Naive thymus-derived CD4-positive, alpha-beta T cell (primary cell): ENCODE measurements at regions of chr4 and their contacts with region 1.

Region 1: DNA sequence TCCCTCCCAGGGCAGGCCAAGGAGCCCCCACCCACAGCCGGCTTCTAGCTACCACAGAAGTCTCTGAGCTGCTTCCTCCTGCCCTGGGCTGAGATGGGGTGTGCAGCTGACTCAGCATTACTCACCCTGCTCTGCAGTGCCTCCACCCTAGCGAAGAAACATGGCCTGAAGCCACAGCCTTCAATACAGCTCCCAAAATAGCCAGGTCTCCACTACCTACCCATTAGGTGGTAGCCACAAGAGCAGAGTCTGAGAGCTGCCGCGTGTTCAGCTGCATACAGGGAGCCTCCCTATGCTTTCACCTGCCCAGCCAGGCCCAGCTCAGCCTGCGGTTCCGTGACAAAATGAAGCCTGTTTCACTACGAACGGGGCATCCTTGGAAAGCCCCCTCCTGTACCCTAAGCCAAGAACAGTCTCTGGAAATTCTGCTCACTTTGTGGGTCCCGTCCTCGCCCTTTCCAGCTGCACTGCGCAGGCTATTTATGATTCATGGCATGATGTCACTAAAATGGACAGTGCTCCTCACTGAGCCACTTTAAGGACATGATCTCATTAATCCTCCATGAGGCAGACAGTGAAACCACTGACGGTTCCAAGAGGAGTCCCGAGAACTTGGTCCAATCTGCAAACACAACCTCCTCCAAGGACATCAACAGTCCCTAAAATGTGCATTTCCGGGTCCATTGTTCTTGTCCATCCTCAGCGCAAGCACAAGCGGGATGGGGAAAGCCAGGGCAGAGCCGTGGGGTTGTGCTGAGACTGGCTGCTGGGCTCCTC is 20.2 kb downstream of the WDR1 start:
- DNase-seq: peak; percentile 39 to 76 (median 69)
- ATAC-seq: peak; percentile 81
- H3K4me3 ChIP-seq: peak overlapping the region; percentile 21
- H3K4me3 Mint-ChIP-seq: peak overlapping the region in 9 of 10 donors; percentile 16 to 79 (median 55)
- H3K27ac ChIP-seq: peak overlapping the region; percentile 67
- H3K27ac Mint-ChIP-seq: peak overlapping the region; percentile 82 to 95 (median 90)
- H3K4me1 ChIP-seq: peaks cover 75 to 82% of the 10 kb centered on the region in 2 donors
- H3K4me1 Mint-ChIP-seq: peaks cover 66 to 100% (median 94%) of the 10 kb centered on the region in 7 donors
- H3K27me3 ChIP-seq: no peaks in the 10 kb centered on the region
- H3K27me3 Mint-ChIP-seq: no peaks in the 10 kb centered on the region

Region 2: GRCh38 chr4:10074767-10075105 is 21.7 kb before region 1 on chr4:
- CTCF ChIA-PET with region 1: interaction called, 3 read pairs
- POLR2A ChIA-PET with region 1: interaction called, 5 read pairs
- intact Hi-C with region 1: loop called in 1 of 2 experiments (anchors 2 kb)
- DNase-seq: no peak
- ATAC-seq: peak; percentile 37
- H3K4me3 ChIP-seq: no peak overlapping the region
- H3K4me3 Mint-ChIP-seq: no peak overlapping the region
- H3K27ac ChIP-seq: no peak overlapping the region
- H3K27ac Mint-ChIP-seq: peak overlapping the region in 5 of 9 donors; percentile 13 to 74 (median 33)
- H3K4me1 ChIP-seq: peaks cover 0 to 2% of the 10 kb centered on the region in 2 donors
- H3K4me1 Mint-ChIP-seq: peaks cover 0 to 8% (median 0%) of the 10 kb centered on the region in 7 donors
- H3K27me3 ChIP-seq: no peaks in the 10 kb centered on the region
- H3K27me3 Mint-ChIP-seq: no peaks in the 10 kb centered on the region

Region 3: DNA sequence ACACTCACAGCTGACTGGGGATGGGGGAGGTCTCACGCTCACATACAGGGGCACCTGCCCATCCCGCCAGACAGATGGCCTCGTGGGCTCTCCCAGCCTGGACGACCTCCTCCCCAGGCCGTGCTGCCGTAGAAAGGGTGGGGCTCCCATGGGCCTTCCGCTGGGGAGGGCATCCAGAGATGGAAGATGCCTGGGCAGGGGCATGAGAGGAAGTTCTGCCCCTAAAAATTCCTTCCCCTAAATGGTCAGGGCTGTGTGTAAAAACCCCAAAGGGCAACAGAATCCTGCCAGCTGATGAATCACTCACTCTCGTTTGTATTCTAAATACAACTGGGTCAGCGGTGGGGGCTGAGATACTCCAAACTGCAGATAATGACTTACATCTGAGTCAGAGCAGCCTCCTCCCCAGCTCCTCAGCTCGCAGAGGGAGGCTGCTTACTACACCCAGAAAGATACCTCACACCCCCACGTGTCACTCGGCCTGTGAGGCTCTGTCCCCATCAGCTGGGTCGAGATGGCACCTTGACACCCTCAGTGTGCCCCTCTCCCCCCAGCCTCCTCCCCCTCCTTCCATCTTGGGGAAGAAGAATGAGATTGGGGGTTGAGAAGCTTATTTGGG is 10.1 kb after region 1 on chr4:
- CTCF ChIA-PET with region 1: no interaction called
- POLR2A ChIA-PET with region 1: interaction called, 124 read pairs
- intact Hi-C with region 1: loop called (anchors 1 kb)
- DNase-seq: peak in 2 of 9 donors; percentile 59 to 69
- ATAC-seq: peak; percentile 83
- H3K4me3 ChIP-seq: peak overlapping the region; percentile 27
- H3K4me3 Mint-ChIP-seq: peak overlapping the region; percentile 29 to 97 (median 70)
- H3K27ac ChIP-seq: peak overlapping the region; percentile 66
- H3K27ac Mint-ChIP-seq: peak overlapping the region; percentile 50 to 93 (median 89)
- H3K4me1 ChIP-seq: peaks cover 79 to 94% of the 10 kb centered on the region in 2 donors
- H3K4me1 Mint-ChIP-seq: peaks cover 88 to 100% (median 98%) of the 10 kb centered on the region in 7 donors
- H3K27me3 ChIP-seq: no peaks in the 10 kb centered on the region
- H3K27me3 Mint-ChIP-seq: no peaks in the 10 kb centered on the region

Region 4: DNA sequence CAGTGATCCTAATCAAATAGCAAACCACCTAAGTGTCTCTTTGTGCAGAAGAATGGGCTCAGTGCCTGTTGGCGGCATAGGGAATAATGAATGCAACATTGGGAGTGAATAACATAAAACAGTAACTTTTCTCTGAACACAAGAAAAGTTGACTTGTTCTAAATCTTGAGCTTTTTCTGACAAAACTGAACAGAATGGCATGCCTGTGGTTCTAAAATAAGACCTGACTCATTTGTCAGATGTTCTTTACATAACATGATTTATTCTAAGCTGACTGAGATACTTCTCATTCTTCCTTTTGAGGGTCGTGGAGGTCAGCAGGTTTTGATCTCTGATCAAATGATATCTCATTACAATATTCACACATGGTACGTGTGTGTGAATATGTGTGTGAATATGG is 185.6 kb after region 1 on chr4:
- CTCF ChIA-PET with region 1: no interaction called
- POLR2A ChIA-PET with region 1: no interaction called
- intact Hi-C with region 1: no loop called
- DNase-seq: no peak
- ATAC-seq: no peak
- H3K4me3 ChIP-seq: no peak overlapping the region
- H3K4me3 Mint-ChIP-seq: no peak overlapping the region
- H3K27ac ChIP-seq: no peak overlapping the region
- H3K27ac Mint-ChIP-seq: no peak overlapping the region
- H3K4me1 ChIP-seq: no peaks in the 10 kb centered on the region
- H3K4me1 Mint-ChIP-seq: no peaks in the 10 kb centered on the region
- H3K27me3 ChIP-seq: no peaks in the 10 kb centered on the region
- H3K27me3 Mint-ChIP-seq: no peaks in the 10 kb centered on the region

Region 5: DNA sequence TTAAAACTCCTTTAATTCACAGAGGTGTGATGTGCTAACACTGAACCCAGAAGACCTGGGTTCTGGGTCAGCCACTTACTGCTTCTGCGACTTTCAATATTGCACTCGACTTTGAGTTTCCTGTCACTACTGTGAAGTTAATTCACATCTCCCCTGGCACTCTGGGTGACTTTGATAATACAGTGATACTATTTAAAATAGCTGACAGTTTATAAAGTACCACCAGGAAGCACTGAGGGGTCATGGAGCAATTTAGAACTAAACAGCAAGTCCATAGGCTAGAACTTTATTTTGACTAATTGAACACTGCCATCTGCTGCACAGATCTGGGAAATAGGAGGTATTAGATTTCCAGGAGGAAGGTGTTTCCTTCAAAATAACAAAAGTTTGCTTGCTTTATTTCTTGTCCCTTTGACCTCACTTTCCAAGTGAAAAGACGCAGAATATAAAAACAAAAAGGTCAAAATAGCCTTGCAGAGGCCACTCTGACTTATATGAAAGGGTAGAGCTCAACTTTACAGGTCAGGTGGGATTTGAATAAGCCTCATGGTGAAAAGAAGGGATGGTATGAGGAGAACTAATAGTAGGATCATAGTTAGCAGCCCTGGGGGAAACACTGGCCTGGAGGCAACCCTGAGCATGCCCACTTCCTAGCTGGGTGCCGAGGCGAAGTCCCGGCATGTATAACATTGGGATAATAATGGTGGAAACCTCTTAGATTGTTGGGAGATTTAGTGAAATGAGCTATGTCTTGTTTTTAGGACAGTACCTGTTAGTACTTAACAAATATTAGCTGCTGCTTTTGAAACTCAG is 307.4 kb after region 1 on chr4:
- CTCF ChIA-PET with region 1: no interaction called
- POLR2A ChIA-PET with region 1: no interaction called
- intact Hi-C with region 1: loop called (anchors 5 to 10 kb)
- DNase-seq: peak in 5 of 9 donors; percentile 20 to 44 (median 34)
- ATAC-seq: peak; percentile 54
- H3K4me3 ChIP-seq: no peak overlapping the region
- H3K4me3 Mint-ChIP-seq: no peak overlapping the region
- H3K27ac ChIP-seq: no peak overlapping the region
- H3K27ac Mint-ChIP-seq: no peak overlapping the region
- H3K4me1 ChIP-seq: no peaks in the 10 kb centered on the region
- H3K4me1 Mint-ChIP-seq: no peaks in the 10 kb centered on the region
- H3K27me3 ChIP-seq: no peaks in the 10 kb centered on the region
- H3K27me3 Mint-ChIP-seq: no peaks in the 10 kb centered on the region

Region 6: GRCh38 chr4:10530137-10530786 is 433.9 kb after region 1 on chr4:
- CTCF ChIA-PET with region 1: no interaction called
- POLR2A ChIA-PET with region 1: no interaction called
- intact Hi-C with region 1: loop called in 1 of 2 experiments (anchors 10 kb)
- DNase-seq: no peak
- ATAC-seq: no peak
- H3K4me3 ChIP-seq: no peak overlapping the region
- H3K4me3 Mint-ChIP-seq: no peak overlapping the region
- H3K27ac ChIP-seq: no peak overlapping the region
- H3K27ac Mint-ChIP-seq: no peak overlapping the region
- H3K4me1 ChIP-seq: no peaks in the 10 kb centered on the region
- H3K4me1 Mint-ChIP-seq: no peaks in the 10 kb centered on the region
- H3K27me3 ChIP-seq: no peaks in the 10 kb centered on the region
- H3K27me3 Mint-ChIP-seq: peaks cover 0 to 18% (median 0%) of the 10 kb centered on the region in 5 donors